AG04450 (cell line): ENCODE measurements at regions of chr9 and their contacts with region 1.

Region 1: GRCh38 chr9:89549031-89549644 is 51.2 kb upstream of the SEMA4D start:
- DNase-seq: peak; percentile 20
- H3K4me3 ChIP-seq: no peak overlapping the region
- H3K27ac ChIP-seq: no peak overlapping the region
- H3K27me3 ChIP-seq: peaks cover 4% of the 10 kb centered on the region
- CTCF ChIP-seq: peak; percentile 94

Region 2: DNA sequence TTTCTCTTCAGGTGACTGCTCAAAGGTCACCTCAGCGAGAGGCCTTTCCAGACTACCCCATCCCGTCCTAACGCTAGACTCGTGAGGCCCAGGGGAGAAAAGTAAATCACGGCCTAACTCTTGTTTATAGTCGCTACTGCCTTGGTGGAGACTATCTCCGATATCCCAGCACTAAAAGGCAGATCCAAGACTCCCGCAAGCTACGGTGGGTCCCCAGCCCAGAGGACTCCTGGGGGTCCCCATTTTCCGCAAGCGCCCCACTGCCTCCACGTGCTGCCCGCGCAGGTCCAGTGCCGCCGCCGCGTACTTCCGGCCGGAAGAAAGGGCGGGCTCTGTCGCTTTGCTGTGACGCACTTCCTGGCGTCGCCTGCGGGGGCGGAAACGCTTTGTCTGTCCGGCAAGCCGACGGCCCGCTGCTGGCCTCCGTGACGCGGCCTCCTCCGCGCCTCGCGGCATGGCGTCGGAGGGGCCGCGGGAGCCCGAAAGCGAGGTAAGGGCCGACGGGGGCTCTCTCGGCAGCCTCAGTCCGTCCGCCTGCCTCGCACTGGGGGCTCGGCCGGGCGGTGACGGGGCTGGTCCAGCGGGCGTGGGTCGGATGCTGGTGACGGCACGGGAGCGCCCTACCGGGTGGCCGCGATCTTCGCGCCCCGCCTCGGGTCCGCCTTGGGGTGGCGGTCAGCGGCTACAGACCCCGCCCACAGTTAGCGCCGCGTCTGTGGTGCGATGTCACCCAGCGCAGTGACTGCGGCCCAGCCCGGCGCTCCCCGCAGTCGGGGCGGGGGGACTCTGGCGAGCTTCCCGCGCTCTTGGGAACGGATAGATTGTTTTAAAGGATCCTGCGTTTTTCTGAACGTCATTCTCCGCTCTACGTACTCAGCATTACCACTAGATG is 230.8 kb before region 1 on chr9 and contains the start of gene SECISBP2:
- CTCF ChIA-PET with region 1: interaction called, 68 read pairs
- POLR2A ChIA-PET with region 1: interaction called, 3 read pairs
- DNase-seq: peak; percentile 93
- H3K4me3 ChIP-seq: peak within 1 kb of the TSS; percentile 71
- H3K27ac ChIP-seq: peak within 1 kb of the TSS; percentile 97
- H3K27me3 ChIP-seq: no peaks in the 10 kb centered on the region
- CTCF ChIP-seq: peak; percentile 82
- polyA plus RNA-seq, gene SECISBP2: 21.4 and 26.3 TPM in 2 replicates

Region 3: GRCh38 chr9:89347651-89348050 is 201.5 kb before region 1 on chr9:
- CTCF ChIA-PET with region 1: interaction called, 34 read pairs
- POLR2A ChIA-PET with region 1: no interaction called
- DNase-seq: no peak
- H3K4me3 ChIP-seq: no peak overlapping the region
- H3K27ac ChIP-seq: no peak overlapping the region
- H3K27me3 ChIP-seq: no peaks in the 10 kb centered on the region
- CTCF ChIP-seq: no peak

Region 4: GRCh38 chr9:89375191-89375760 is 173.9 kb before region 1 on chr9:
- CTCF ChIA-PET with region 1: interaction called, 12 read pairs
- POLR2A ChIA-PET with region 1: no interaction called
- DNase-seq: no peak
- H3K4me3 ChIP-seq: no peak overlapping the region
- H3K27ac ChIP-seq: no peak overlapping the region
- H3K27me3 ChIP-seq: no peaks in the 10 kb centered on the region
- CTCF ChIP-seq: no peak

Region 5: DNA sequence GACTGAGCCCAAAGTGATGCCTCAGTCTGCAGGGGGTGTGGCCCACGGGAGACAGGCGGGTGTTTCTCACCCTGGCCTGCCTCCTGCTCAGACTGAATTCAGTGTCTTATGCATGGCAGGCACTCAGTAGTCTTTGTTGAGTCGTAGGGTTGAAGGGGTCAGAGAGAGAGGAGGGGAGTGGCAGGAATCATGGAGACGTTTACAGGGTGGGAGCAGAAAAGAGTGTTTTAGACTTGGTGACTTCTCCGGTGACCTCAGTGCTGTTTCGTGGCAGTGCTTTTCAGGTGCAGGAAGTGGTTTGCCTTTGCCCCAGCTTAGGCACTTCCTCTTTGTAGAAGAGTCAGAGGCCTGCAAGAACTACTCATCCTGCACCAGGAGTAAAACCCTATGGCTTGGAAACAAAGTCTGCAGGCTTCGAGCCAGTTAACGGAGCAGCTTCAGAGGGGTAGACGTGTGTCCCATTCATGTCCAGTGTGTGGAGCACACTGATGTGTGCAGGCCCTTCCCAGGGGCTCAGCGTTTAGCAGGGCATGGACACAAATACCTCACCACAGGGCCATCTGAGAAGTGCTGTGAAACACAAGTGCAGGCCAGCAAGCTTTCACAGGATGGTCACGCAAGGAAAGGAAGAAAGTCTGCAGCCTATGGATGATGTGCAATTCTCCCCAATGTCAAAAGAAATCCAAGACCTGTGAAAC is 26.7 kb before region 1 on chr9:
- CTCF ChIA-PET with region 1: interaction called, 24 read pairs
- POLR2A ChIA-PET with region 1: no interaction called
- DNase-seq: no peak
- H3K4me3 ChIP-seq: no peak overlapping the region
- H3K27ac ChIP-seq: no peak overlapping the region
- H3K27me3 ChIP-seq: no peaks in the 10 kb centered on the region
- CTCF ChIP-seq: no peak

Region 6: GRCh38 chr9:89538871-89539270 is 10.3 kb before region 1 on chr9:
- CTCF ChIA-PET with region 1: interaction called, 17 read pairs
- POLR2A ChIA-PET with region 1: no interaction called
- DNase-seq: no peak
- H3K4me3 ChIP-seq: no peak overlapping the region
- H3K27ac ChIP-seq: no peak overlapping the region
- H3K27me3 ChIP-seq: peaks cover 2% of the 10 kb centered on the region
- CTCF ChIP-seq: no peak

Region 7: GRCh38 chr9:89588006-89588879 is 39.1 kb after region 1 on chr9:
- CTCF ChIA-PET with region 1: no interaction called
- POLR2A ChIA-PET with region 1: no interaction called
- DNase-seq: no peak
- H3K4me3 ChIP-seq: no peak overlapping the region
- H3K27ac ChIP-seq: no peak overlapping the region
- H3K27me3 ChIP-seq: peaks cover 4% of the 10 kb centered on the region
- CTCF ChIP-seq: no peak

Region 8: DNA sequence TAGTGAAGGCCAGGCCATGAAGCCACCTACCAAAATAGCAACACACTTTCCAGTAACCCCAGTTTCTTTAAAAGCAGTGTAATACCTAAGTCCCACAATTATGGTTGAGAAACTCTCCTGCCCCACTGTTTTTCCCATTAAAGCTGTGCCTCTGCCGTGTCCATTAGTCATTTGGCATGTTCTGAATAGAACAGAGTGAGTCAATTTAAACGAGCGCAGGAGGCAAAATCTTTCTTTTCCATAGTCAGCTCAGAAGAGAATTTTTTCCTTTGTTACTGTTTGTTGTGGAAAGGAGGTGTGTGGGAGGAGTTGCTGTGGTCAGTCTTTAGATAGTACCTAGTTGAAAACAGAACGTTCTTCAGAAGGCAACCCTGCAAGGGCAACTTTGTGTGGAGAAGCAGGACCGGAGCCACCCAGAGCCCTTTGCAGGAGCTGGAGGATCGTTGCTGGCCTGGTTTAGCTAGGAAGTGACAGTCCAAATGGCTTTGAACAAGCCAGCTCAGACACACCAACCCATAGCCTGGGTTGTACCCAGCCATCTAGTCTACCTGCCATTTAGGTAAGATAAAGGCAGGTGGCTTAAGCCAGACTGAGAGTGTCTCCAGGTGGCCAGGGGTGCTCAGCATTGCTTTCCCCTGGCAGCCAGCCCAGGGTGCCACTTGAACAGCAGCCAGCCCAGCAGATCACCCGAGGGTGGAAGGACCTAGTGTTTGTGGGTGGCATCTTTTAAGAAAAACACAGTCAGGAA is 86.0 kb after region 1 on chr9:
- CTCF ChIA-PET with region 1: no interaction called
- POLR2A ChIA-PET with region 1: no interaction called
- DNase-seq: no peak
- H3K4me3 ChIP-seq: no peak overlapping the region
- H3K27ac ChIP-seq: no peak overlapping the region
- H3K27me3 ChIP-seq: peaks cover 15% of the 10 kb centered on the region
- CTCF ChIP-seq: no peak